ENCODE measurements at regions of chr6 and their contacts with region 1.

Region 1: DNA sequence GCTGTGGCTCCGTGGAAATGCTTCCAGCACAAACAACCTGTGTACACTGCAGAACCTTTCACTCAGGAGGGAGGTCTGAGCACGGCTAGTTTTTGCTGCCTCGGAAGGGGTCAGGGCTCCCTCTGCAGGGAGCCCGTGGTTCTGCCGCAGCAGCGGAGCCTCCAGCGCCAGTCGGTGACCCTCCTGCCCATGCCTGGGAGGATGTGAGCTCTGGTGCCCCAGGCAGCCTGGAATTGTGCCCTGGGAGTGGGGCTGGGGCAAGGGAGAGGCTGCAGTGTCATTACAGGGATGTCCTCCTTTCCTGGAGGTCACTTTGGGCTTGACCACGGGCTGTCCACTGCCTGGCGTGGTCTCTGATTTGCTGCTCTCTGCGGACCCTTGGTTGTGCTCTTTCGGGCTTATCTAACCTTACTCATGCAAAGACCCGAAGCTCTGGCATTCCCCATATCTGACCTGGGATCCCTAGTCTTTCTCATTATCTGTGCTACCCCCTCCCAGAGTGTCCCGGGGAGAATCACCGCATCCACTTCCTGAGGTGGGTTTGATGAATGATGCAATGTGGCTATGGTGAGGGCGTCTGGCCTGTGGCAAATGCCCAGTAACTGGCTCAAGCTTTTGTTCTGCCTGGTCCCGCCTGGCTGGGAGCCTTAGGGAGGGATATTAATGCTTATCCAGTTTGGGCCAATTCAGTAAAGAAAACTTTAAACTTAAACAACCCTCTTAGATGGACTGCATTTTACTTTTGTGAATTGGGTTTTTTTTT is 59.6 kb upstream of the TAGAP start:
- DNase-seq: peak; percentile 83
- H3K4me3 Mint-ChIP-seq: no peak overlapping the region
- H3K27ac Mint-ChIP-seq: peak overlapping the region; percentile 83
- H3K4me1 Mint-ChIP-seq: peaks cover 76% of the 10 kb centered on the region
- H3K27me3 Mint-ChIP-seq: no peaks in the 10 kb centered on the region

Region 2: DNA sequence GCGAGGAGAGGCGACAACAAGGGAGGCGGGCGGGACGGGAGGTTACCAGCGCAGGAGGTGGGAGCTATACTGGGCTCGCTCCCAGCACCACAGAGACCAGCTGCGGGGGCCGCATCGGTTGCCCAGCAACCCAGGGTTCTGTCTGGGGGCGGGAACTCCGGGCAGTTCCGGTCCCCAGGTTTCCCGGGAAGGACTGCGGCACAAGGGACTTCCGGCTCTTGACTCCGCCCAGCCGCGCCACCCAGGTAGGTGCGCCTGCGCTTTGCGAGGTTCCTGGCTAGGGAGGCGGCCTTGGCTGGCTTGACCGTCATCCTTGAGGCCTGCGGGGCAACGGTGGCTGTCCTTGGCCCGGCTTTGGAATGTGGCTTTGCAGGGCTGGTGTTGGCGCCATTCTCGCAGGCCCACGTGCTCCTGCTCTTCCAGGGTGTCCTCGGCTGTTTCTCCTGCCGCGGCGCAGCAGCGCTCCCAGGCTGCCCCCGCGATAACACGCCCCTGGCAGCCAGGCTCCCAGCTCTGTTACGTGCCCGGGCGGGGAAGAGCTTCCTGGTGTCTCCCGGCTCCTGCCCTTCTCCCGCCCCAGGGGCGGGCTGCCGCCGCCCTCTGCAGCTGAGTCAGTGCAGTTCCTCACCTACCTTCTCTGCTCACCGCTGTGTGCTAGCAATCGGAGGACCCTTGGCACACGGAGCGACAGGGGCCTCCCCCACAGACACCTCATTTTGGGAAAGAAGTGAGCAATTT is 104.5 kb before region 1 on chr6 and contains the start of gene RSPH3:
- CTCF ChIA-PET with region 1: interaction called, 130 read pairs
- POLR2A ChIA-PET with region 1: no interaction called
- DNase-seq: peak; percentile 91
- H3K4me3 Mint-ChIP-seq: peak within 1 kb of the TSS; percentile 94
- H3K27ac Mint-ChIP-seq: peak within 1 kb of the TSS; percentile 88
- H3K4me1 Mint-ChIP-seq: peaks cover 37% of the 10 kb centered on the region
- H3K27me3 Mint-ChIP-seq: no peaks in the 10 kb centered on the region
- total RNA-seq, gene RSPH3: 2.4 to 2.9 TPM

Region 3: GRCh38 chr6:159008656-159009288 is 95.6 kb before region 1 on chr6:
- CTCF ChIA-PET with region 1: interaction called, 130 read pairs
- POLR2A ChIA-PET with region 1: interaction called, 3 read pairs
- DNase-seq: no peak
- H3K4me3 Mint-ChIP-seq: peak overlapping the region; percentile 26
- H3K27ac Mint-ChIP-seq: peak overlapping the region; percentile 81
- H3K4me1 Mint-ChIP-seq: peaks cover 30% of the 10 kb centered on the region
- H3K27me3 Mint-ChIP-seq: no peaks in the 10 kb centered on the region

Region 4: DNA sequence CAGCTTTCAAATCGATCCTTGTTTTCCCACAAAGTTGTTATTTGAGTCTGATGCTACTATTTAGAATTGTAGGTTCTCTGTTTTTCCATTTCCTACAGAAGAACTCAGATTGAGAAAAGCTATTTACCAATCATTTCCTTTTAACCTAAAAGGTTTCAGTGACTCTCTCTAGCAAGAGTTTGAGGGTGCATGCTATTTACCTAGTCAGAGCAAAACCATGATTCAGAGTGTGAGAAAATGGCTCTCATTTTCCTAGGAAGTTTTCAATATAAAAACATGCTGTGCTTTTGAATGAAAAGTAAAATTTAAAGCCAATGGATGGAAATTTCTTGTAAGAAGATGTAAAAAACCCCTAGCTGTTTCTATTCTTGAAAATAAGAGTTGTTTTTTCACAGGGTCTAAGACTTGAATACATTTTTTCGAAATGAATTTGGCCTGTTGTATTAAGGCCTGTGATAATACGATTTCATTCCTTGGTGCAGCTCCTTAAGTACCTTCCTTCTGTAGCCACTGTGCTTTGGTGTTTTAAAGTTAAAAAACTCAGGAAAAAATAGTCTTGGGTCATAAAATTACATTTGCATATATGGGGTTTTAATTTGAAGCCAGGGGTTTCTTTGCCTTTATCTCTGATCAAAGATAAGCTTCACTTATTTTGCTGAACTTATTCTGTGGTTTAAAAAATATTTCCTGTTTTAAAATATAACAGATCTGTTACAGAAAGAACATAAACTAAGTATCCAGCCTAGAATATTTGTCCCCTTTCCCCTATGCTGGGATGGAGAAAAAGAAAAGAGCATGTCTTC is 86.4 kb before region 1 on chr6:
- CTCF ChIA-PET with region 1: interaction called, 10 read pairs
- POLR2A ChIA-PET with region 1: interaction called, 3 read pairs
- DNase-seq: no peak
- H3K4me3 Mint-ChIP-seq: no peak overlapping the region
- H3K27ac Mint-ChIP-seq: peak overlapping the region; percentile 41
- H3K4me1 Mint-ChIP-seq: peaks cover 30% of the 10 kb centered on the region
- H3K27me3 Mint-ChIP-seq: no peaks in the 10 kb centered on the region

Region 5: GRCh38 chr6:159042003-159042825 is 62.1 kb before region 1 on chr6:
- CTCF ChIA-PET with region 1: interaction called, 113 read pairs
- POLR2A ChIA-PET with region 1: interaction called, 3 read pairs
- DNase-seq: peak; percentile 86
- H3K4me3 Mint-ChIP-seq: peak overlapping the region; percentile 97
- H3K27ac Mint-ChIP-seq: peak overlapping the region; percentile 97
- H3K4me1 Mint-ChIP-seq: peaks cover 61% of the 10 kb centered on the region
- H3K27me3 Mint-ChIP-seq: no peaks in the 10 kb centered on the region

Region 6: DNA sequence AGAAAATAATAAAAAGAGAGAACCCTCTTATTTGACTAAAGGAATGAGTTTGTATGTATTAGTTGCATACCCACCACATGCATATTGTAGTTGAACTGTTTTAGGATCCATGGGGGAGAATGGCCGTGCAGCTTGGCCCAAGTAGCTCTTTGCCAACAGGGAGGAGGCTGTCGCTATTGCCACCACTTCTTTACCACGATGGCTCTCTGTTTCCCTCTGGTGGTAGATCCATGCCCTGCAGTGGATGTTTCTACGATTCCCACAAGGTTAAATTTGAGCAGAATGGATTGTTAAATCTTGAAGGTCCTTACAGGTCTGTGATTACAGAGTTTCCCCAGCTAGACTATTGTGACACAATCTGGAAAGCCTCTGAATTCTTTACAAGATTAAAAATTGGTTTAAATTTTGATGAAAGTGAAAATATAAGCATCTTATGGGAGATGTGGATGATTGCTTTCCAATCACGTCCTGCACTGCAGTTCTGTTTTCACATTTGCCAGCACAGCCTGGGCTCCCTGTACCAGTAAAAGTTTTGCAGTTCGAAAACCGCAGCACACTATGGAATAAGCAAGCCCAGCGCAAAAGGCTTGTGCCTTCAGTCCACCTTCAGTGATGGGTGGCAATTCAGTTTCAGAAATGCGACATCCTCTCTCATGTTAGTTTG is 30.5 kb after region 1 on chr6:
- CTCF ChIA-PET with region 1: interaction called, 19 read pairs
- POLR2A ChIA-PET with region 1: no interaction called
- DNase-seq: peak; percentile 80
- H3K4me3 Mint-ChIP-seq: no peak overlapping the region
- H3K27ac Mint-ChIP-seq: no peak overlapping the region
- H3K4me1 Mint-ChIP-seq: peaks cover 11% of the 10 kb centered on the region
- H3K27me3 Mint-ChIP-seq: peaks cover 29% of the 10 kb centered on the region

Region 7: GRCh38 chr6:160750276-160750689 is 1645.9 kb after region 1 on chr6:
- CTCF ChIA-PET with region 1: no interaction called
- POLR2A ChIA-PET with region 1: no interaction called
- DNase-seq: no peak
- H3K4me3 Mint-ChIP-seq: no peak overlapping the region
- H3K27ac Mint-ChIP-seq: no peak overlapping the region
- H3K4me1 Mint-ChIP-seq: no peaks in the 10 kb centered on the region
- H3K27me3 Mint-ChIP-seq: no peaks in the 10 kb centered on the region

Measured in activated CD4-positive, alpha-beta T cell treated with anti-CD3 and anti-CD28 coated beads, Interleukin-2, amount 10 ng/mL, durations not matched to agents 7 days and 5 days (primary cell).